PC-9 (cell line): ENCODE measurements at regions of chr3 and their contacts with region 1.

Region 1: DNA sequence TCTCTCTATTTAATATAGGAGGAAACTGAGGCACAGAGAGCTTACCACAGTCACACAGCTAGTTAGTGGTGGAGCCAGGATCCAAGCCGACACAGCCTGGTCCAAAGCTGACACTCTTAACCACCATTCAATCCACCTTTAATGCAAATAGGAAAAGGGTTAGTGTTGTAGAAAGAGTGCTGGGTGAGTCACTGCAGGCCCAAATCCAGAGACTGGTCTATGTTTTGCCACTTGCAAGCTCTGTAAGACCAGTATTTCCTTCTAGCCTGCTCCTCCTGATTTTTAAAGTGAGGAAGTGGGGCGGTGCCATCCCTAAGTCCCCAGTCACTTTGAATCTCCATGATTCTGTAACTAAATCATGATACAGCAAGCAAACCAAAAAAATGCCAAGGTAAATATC is 111.0 kb downstream of the MECOM start:
- DNase-seq: peak in 1 of 2 experiments; percentile 37
- H3K4me3 ChIP-seq: no peak overlapping the region
- H3K27ac ChIP-seq: no peak overlapping the region
- H3K4me1 ChIP-seq: 0 out of 2 replicates have a peak, but pooled peaks cover 5% of the 10 kb centered on the region
- H3K27me3 ChIP-seq: no peaks in the 10 kb centered on the region
- CTCF ChIP-seq: no peak

Region 2: DNA sequence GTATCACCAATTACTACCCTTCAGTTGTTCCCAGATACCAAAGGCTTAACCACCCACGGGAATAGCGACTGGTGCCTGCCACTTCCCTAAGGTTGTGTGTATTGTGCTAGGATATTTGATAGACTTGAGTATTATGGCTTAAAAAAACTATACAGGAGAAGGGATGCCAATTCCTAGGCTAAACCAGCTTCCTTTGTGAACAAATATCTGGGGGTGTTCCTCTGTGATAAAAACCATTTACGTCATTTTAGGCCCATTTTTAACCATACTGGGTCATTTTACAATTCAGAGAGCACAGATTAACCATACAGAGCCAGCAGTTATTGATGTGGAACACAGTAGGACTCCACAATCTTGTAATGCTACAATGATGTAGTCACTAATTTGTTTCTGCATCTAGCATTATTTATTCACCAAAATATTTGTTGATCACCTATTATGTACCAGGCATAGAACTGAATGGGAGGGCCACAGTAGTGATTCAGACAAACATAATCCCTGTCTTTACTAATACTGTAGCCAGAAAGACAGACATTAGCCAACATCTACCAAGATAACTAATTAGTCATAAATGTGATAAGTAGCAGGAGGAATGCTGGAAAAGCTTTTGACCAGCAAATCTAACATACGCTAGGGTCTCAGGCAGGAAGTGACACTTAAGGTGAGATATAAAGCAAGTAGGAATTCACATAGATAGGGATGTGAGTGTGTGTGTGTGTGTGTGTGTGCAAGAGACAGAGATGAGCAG is 73.8 kb before region 1 on chr3:
- CTCF ChIA-PET with region 1: no interaction called
- POLR2A ChIA-PET with region 1: no interaction called
- intact Hi-C with region 1: loop called (anchors 2 kb)
- DNase-seq: peak in 1 of 2 experiments; percentile 70
- H3K4me3 ChIP-seq: no peak overlapping the region
- H3K27ac ChIP-seq: no peak overlapping the region
- H3K4me1 ChIP-seq: no peaks in the 10 kb centered on the region
- H3K27me3 ChIP-seq: no peaks in the 10 kb centered on the region
- CTCF ChIP-seq: no peak